Breast epithelium (tissue), 4 donors: ENCODE measurements at regions of chr22 and their contacts with region 1.

Region 1: GRCh38 chr22:36891646-36892045 is 21.8 kb upstream of the CSF2RB start:
- DNase-seq: no peak
- H3K4me3 ChIP-seq: no peak overlapping the region
- H3K27ac ChIP-seq: no peak overlapping the region
- H3K4me1 ChIP-seq: no peaks in the 10 kb centered on the region
- H3K27me3 ChIP-seq: no peaks in the 10 kb centered on the region
- CTCF ChIP-seq: no peak
- POLR2A ChIP-seq: no peak

Region 2: DNA sequence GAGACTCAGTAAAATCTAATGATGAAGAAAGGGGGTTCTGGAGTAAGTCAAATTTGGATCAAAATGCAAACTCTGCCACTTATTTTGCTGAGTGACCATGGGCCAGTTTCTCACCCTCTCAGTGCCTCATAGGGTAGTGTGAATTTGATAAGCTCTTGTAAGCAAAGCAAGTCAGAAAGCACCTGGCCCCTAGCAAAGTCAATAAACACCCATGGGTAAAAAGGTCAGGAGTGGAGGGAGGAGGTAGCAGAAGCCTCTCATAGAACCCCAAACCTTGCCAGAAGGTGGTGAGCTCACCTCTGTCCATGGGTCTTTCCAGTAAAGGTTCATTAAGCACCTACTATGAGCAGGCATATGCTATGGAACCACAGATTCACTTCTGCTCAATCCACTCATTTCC is 169.6 kb before region 1 on chr22:
- intact Hi-C with region 1: no loop called
- DNase-seq: no peak
- H3K4me3 ChIP-seq: no peak overlapping the region
- H3K27ac ChIP-seq: no peak overlapping the region
- H3K4me1 ChIP-seq: no peaks in the 10 kb centered on the region
- H3K27me3 ChIP-seq: peaks cover 0 to 48% of the 10 kb centered on the region in 2 donors
- CTCF ChIP-seq: no peak
- POLR2A ChIP-seq: no peak

Region 3: GRCh38 chr22:36790648-36791047 is 101.0 kb before region 1 on chr22:
- intact Hi-C with region 1: no loop called
- DNase-seq: no peak
- H3K4me3 ChIP-seq: no peak overlapping the region
- H3K27ac ChIP-seq: no peak overlapping the region
- H3K4me1 ChIP-seq: no peaks in the 10 kb centered on the region
- H3K27me3 ChIP-seq: peaks cover 0 to 7% of the 10 kb centered on the region in 2 donors
- CTCF ChIP-seq: no peak
- POLR2A ChIP-seq: no peak

Region 4: GRCh38 chr22:36865346-36865745 is 26.3 kb before region 1 on chr22:
- intact Hi-C with region 1: loop called (anchors 2 kb)
- DNase-seq: no peak
- H3K4me3 ChIP-seq: no peak overlapping the region
- H3K27ac ChIP-seq: no peak overlapping the region
- H3K4me1 ChIP-seq: peaks cover 0 to 2% of the 10 kb centered on the region in 2 donors
- H3K27me3 ChIP-seq: peaks cover 0 to 14% of the 10 kb centered on the region in 2 donors
- CTCF ChIP-seq: no peak
- POLR2A ChIP-seq: no peak

Region 5: GRCh38 chr22:36966851-36967540 is 75.3 kb after region 1 on chr22:
- intact Hi-C with region 1: no loop called
- DNase-seq: no peak
- H3K4me3 ChIP-seq: no peak overlapping the region
- H3K27ac ChIP-seq: no peak overlapping the region
- H3K4me1 ChIP-seq: no peaks in the 10 kb centered on the region
- H3K27me3 ChIP-seq: no peaks in the 10 kb centered on the region
- CTCF ChIP-seq: no peak
- POLR2A ChIP-seq: no peak